ENCODE measurements at regions of chr7 and their contacts with region 1.

Region 1: GRCh38 chr7:150404805-150405583 is 25.9 kb downstream of the ZNF775 start:
- DNase-seq: peak; percentile 86
- H3K4me3 Mint-ChIP-seq: peak overlapping the region; percentile 86
- H3K27ac Mint-ChIP-seq: peak overlapping the region; percentile 84
- H3K4me1 Mint-ChIP-seq: peaks cover 45% of the 10 kb centered on the region
- H3K27me3 Mint-ChIP-seq: no peaks in the 10 kb centered on the region

Region 2: GRCh38 chr7:150322833-150323681 is 81.9 kb before region 1 on chr7 and contains the starts of genes ACTR3C and LRRC61:
- CTCF ChIA-PET with region 1: interaction called, 5 read pairs
- POLR2A ChIA-PET with region 1: interaction called, 11 read pairs
- DNase-seq: peak; percentile 74
- H3K4me3 Mint-ChIP-seq: peak within 1 kb of the TSS; percentile 98
- H3K27ac Mint-ChIP-seq: peak within 1 kb of the TSS; percentile 99
- H3K4me1 Mint-ChIP-seq: peaks cover 53% of the 10 kb centered on the region
- H3K27me3 Mint-ChIP-seq: no peaks in the 10 kb centered on the region
- total RNA-seq, gene ACTR3C: 4.9 to 7.0 TPM
- total RNA-seq, gene LRRC61: 23.1 to 26.8 TPM

Region 3: DNA sequence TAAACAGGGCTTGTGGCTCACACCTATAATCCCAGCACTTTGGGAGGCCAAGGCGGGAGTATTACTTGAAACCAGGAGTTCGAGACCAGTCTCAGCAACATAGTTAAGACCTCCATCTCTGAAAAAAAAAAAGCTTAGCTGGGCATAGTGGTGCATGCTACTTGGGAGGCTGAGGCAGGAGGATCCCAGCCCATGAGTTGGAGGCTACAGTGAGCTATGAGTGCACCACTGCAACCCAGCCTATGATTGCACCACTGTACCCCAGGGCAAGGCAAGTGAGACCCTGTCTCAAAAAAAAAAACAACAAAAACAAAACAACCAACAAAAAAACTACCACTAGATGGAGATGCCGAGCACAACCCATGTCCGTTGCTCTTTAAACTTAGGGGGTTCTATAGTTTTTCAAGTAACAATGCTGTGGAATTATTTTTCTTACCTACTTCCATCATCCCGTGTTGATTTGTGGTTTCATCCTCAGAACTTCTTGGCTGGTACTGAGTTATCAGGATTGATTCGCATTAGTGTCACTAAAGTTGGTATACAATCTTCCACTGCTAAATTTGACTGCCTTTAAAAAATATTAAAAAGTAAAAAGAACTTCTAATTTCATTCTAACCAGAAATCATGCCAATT is 48.6 kb before region 1 on chr7:
- CTCF ChIA-PET with region 1: interaction called, 12 read pairs
- POLR2A ChIA-PET with region 1: interaction called, 10 read pairs
- DNase-seq: no peak
- H3K4me3 Mint-ChIP-seq: no peak overlapping the region
- H3K27ac Mint-ChIP-seq: peak overlapping the region; percentile 13
- H3K4me1 Mint-ChIP-seq: peaks cover 43% of the 10 kb centered on the region
- H3K27me3 Mint-ChIP-seq: no peaks in the 10 kb centered on the region

Region 4: DNA sequence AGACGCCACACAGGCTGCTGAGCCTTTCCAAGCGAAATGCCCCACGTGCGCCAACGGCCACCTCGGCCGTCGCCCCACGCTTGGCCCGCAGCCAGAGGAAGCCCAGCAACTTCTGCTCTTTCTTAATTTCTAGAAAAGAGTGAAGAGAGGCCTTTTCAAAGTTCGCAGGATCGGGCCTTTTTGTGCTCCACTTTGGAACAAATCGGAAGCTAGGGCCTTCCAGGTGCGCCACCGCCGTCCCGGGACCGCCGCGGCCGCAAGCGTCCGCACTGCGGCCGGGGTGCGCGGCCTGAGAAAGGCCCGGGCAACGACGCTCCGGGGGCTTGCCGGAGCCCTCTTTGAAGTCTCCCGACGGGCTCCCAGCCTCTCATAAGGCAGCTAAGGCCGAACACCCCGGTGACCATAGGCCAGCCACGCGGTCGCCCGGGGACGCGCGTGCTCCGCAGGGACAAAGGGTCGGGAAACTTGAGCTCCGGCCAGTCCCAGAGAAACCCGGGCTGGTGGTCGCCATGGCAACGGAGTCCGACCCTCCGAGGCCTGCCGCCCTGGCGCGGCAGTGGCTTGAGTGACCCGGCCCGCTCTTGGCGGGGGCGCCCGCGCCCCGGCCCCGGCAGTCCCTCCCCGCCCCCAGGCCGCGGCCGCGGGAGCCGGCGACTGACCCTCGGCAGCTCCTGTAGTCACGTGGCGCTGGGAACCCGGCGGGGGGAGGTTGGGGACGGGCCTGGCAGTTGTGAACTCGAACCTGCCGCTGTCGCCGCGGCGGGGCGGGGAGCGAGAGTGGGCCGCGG is 36.7 kb before region 1 on chr7 and contains the start of gene REPIN1:
- CTCF ChIA-PET with region 1: interaction called, 6 read pairs
- POLR2A ChIA-PET with region 1: interaction called, 41 read pairs
- DNase-seq: peak; percentile 84
- H3K4me3 Mint-ChIP-seq: peak within 1 kb of the TSS; percentile 87
- H3K27ac Mint-ChIP-seq: peak within 1 kb of the TSS; percentile 79
- H3K4me1 Mint-ChIP-seq: peaks cover 38% of the 10 kb centered on the region
- H3K27me3 Mint-ChIP-seq: no peaks in the 10 kb centered on the region
- total RNA-seq, gene REPIN1: 42.9 to 45.9 TPM

Region 5: DNA sequence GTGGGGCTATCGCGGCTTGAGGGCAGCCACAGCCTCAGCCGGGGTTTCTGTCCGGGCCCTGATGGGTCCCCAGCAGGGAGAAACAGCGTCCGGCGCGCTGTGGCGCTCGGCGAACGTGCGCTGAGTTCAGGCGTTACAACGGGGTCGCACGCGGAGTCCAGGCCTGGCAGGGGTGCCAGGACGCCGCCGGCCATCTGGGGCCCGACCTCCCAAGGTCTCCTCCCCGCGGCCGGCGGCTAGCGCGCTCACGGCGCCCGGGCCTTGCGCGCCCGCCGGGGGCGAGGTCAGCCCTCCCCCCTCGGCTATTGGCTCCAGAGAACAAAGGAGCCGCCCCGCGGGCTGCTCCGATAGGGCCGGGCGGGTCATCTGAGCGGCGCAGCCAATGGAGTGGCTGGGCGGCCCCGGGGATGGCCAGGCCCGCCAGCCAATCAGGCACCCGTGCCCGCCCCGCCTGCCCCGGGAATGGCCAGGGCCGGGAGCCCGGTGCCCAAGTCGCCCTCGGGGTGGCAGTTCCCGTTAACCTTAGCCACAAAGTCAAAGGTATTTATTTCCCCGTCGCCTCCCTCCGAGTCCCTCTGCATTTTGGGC is 26.0 kb before region 1 on chr7 and contains the start of gene ZNF775:
- CTCF ChIA-PET with region 1: interaction called, 5 read pairs
- POLR2A ChIA-PET with region 1: interaction called, 26 read pairs
- DNase-seq: peak; percentile 95
- H3K4me3 Mint-ChIP-seq: peak within 1 kb of the TSS; percentile 80
- H3K27ac Mint-ChIP-seq: peak within 1 kb of the TSS; percentile 72
- H3K4me1 Mint-ChIP-seq: peaks cover 48% of the 10 kb centered on the region
- H3K27me3 Mint-ChIP-seq: no peaks in the 10 kb centered on the region
- total RNA-seq, gene ZNF775: 6.4 to 7.1 TPM

Region 6: GRCh38 chr7:151152643-151153513 is 747.9 kb after region 1 on chr7:
- CTCF ChIA-PET with region 1: no interaction called
- POLR2A ChIA-PET with region 1: no interaction called
- DNase-seq: no peak
- H3K4me3 Mint-ChIP-seq: no peak overlapping the region
- H3K27ac Mint-ChIP-seq: no peak overlapping the region
- H3K4me1 Mint-ChIP-seq: no peaks in the 10 kb centered on the region
- H3K27me3 Mint-ChIP-seq: peaks cover 31% of the 10 kb centered on the region

Measured in activated CD4-positive, alpha-beta memory T cell treated with anti-CD3 and anti-CD28 coated beads, Interleukin-2, amount 10 ng/mL, durations not matched to agents 7 days and 5 days (primary cell).